Cardiac septum (tissue), 1 donor: ENCODE measurements at regions of chr10 and their contacts with region 1.

Region 1: GRCh38 chr10:69800109-69800508 is 1.6 kb upstream of the COL13A1 start:
- DNase-seq: no peak

Region 2: DNA sequence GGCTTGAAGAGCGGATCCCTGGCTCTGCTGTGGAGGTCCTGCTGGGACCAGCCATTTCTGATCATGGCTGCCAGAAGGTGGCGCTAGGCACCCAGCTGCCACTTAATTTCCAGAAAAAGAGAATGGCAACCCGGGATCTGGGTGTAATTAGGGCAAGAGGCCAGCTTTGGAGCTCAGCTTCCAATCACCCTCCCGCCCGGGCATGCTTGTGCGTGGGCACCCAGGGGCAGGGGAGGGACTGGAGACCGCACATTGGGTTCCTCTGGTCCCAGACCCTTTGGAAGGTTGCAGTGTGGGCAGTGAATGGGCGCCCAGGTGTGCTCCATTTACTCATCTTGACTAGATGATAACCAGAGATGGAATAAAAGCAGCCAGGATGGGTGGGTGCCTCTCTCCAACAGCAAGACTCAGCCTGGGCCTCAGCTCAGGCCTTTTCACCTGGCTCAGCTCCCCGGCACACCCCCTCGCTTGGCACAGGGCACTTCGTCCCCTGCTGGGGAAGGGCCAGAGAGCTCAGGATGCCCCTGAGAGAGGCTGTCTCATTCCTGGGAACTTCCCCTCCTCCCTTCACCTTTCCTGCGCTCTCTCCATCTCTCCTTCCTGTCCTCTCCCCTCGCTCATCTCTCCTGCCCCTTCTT is 155.3 kb before region 1 on chr10:
- intact Hi-C with region 1: loop called (anchors 2 kb)
- DNase-seq: no peak

Region 3: GRCh38 chr10:69731184-69731583 is 68.9 kb before region 1 on chr10:
- intact Hi-C with region 1: loop called (anchors 1 kb)
- DNase-seq: no peak

Region 4: DNA sequence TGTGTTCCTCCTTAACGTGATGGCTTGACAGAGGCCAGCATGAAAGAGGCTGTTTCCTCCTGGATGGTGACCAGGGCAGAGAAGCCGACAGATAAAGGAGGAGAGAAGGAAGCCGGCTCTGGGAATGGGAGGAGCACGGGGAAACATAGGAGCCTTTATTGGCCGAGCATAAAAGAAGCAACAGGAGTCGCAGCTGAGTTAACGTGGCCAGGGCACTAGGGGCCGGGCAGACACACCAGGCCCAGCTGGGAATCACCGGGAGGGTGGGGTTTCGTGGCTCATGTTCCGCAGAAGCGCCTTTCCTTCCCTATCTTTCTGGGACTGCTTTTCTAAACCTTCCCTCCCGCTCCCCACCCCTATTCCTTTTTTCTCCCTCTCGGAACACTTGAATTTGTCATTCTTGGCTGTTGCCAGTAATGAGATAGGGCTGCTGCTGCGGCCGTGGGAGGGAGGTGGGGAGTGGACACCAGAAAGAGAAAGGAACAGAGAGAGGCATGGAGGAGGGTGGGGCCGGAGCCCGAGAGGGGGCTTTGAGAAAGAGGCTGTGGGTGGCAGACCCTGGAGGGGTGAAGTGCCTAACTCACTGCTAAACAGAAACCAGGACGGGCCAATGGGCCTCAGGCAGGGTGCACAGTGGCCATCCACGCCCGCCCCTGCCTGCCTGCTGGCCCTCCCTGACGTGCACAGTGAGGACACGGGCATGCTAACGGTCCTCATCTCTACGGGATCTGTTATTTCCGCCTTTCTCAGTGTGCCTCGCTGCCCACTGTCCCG is 66.8 kb after region 1 on chr10:
- intact Hi-C with region 1: loop called (anchors 5 kb)
- DNase-seq: no peak